Activated CD4-positive, alpha-beta memory T cell treated with anti-CD3 and anti-CD28 coated beads for 36 hours (primary cell): ENCODE measurements at regions of chr6 and their contacts with region 1.

Region 1: DNA sequence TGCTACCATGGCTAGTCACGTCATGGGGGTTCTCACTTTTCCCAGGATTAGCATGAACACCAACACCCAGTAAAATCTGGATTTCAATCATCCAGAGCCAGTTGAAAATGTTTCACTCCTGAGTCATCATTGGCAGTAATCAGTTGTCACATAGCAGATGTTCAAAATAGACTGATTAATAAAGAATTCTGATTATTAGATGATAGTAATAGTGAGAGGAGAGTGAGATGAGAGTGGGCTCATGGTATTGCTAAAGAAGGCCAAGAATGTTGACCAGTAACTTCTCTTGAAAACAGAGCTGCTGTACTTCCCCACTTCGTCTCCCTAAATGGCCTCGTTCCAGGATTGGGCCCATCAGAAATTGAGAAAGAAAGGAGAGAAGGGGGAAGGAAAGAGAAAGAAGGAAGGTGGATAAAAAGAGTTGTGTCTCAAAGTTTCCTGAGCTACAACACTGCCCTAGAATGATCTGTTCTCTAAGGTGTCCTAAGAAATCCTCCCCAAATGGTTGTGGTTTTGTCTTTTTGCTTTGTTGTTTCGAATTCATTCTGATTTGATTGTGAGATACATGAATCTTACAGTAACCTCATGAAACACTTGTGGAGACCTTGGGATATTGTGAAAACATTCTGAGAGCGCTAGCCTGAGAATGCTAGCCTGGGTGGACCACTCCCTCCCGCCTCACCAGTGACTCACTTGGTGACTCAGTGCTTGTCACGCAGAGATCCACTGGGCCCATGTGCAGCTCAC is 502.2 kb upstream of the JARID2 start:
- DNase-seq: peak; percentile 93
- H3K4me3 Mint-ChIP-seq: peak overlapping the region; percentile 58
- H3K27ac Mint-ChIP-seq: peak overlapping the region; percentile 98
- H3K4me1 Mint-ChIP-seq: peaks cover 83% of the 10 kb centered on the region
- H3K27me3 Mint-ChIP-seq: no peaks in the 10 kb centered on the region

Region 2: GRCh38 chr6:14784596-14785492 is 41.2 kb after region 1 on chr6:
- CTCF ChIA-PET with region 1: interaction called, 5 read pairs
- POLR2A ChIA-PET with region 1: interaction called, 4 read pairs
- intact Hi-C with region 1: loop called (anchors 1 kb)
- DNase-seq: peak; percentile 36
- H3K4me3 Mint-ChIP-seq: peak overlapping the region; percentile 49
- H3K27ac Mint-ChIP-seq: peak overlapping the region; percentile 71
- H3K4me1 Mint-ChIP-seq: peaks cover 36% of the 10 kb centered on the region
- H3K27me3 Mint-ChIP-seq: no peaks in the 10 kb centered on the region